ENCODE measurements at regions of chr1 and their contacts with region 1.

Region 1: GRCh38 chr1:205255941-205256780 is 28.4 kb downstream of the TMCC2 start:
- DNase-seq: peak; percentile 64
- ATAC-seq: peak; percentile 98
- H3K4me3 ChIP-seq: no peak overlapping the region
- H3K27ac ChIP-seq: no peak overlapping the region
- H3K4me1 ChIP-seq: peaks cover 4% of the 10 kb centered on the region
- H3K27me3 ChIP-seq: no peaks in the 10 kb centered on the region
- CTCF ChIP-seq: peak; percentile 93

Region 2: GRCh38 chr1:204989266-204990058 is 266.7 kb before region 1 on chr1:
- CTCF ChIA-PET with region 1: interaction called, 4 read pairs
- POLR2A ChIA-PET with region 1: interaction called, 4 read pairs
- in situ Hi-C with region 1: no loop called
- intact Hi-C with region 1: loop called (anchors 10 kb)
- DNase-seq: peak; percentile 53
- ATAC-seq: peak; percentile 88
- H3K4me3 ChIP-seq: no peak overlapping the region
- H3K27ac ChIP-seq: no peak overlapping the region
- H3K4me1 ChIP-seq: no peaks in the 10 kb centered on the region
- H3K27me3 ChIP-seq: no peaks in the 10 kb centered on the region; the same call in 1 of the 2 replicates
- CTCF ChIP-seq: peak; percentile 98

Region 3: GRCh38 chr1:205061665-205062069 is 194.5 kb before region 1 on chr1:
- CTCF ChIA-PET with region 1: interaction called, 5 read pairs
- POLR2A ChIA-PET with region 1: no interaction called
- in situ Hi-C with region 1: no loop called
- intact Hi-C with region 1: loop called (anchors 5 kb)
- DNase-seq: peak; percentile 36
- ATAC-seq: peak; percentile 76
- H3K4me3 ChIP-seq: no peak overlapping the region
- H3K27ac ChIP-seq: no peak overlapping the region
- H3K4me1 ChIP-seq: no peaks in the 10 kb centered on the region; the same call in 1 of the 2 replicates
- H3K27me3 ChIP-seq: no peaks in the 10 kb centered on the region
- CTCF ChIP-seq: peak; percentile 94

Region 4: DNA sequence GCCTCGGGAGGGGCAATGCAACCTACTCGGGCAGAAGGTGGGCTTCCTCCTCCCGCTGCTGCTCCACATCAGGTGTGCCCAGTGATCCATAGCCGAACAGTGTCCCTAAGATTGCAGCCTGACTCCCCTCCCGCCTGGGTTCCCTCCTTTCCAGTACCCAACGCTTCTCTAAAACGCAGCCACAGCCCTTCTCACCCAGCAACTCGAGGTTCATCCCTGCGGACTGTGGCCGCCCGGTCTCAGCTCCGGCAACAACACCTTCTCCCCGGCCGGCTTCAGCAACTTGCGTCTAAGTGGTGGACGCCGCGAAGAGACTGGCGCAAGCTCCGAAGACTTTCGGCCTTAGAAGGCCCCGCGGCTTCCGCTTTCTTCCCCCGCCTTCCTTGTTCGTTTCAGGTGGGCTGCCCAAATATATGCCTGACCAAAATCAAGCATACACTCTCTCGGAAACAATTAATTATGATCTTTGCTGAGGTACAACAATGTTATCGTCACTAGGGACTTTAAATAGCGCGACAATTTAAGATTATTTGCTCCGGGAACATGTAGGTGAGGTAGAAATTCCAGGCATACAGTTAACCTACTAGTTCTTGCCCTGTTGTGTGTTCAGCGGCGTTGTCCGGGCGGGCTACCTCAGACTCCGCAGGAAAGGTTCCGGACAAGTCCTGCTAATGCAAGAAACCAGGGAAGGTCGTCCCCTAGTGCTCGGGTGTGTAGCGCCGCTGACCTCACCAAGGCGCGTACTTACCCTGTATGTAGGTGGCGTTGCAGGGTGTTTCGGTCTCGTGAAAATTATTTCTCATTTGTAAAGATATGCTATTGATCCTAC is 134.3 kb before region 1 on chr1 and contains the start of gene RBBP5:
- CTCF ChIA-PET with region 1: no interaction called
- POLR2A ChIA-PET with region 1: interaction called, 5 read pairs
- in situ Hi-C with region 1: no loop called
- intact Hi-C with region 1: loop called (anchors 10 kb)
- DNase-seq: peak; percentile 97
- ATAC-seq: peak; percentile 100
- H3K4me3 ChIP-seq: peak within 1 kb of the TSS; percentile 96 to 97
- H3K27ac ChIP-seq: peak within 1 kb of the TSS; percentile 98
- H3K4me1 ChIP-seq: peaks cover 14% of the 10 kb centered on the region
- H3K27me3 ChIP-seq: no peaks in the 10 kb centered on the region
- CTCF ChIP-seq: peak; percentile 94
- total RNA-seq, gene RBBP5: 22.2 TPM

Region 5: GRCh38 chr1:205227584-205228006 is 28.6 kb before region 1 on chr1 and contains the start of gene TMCC2:
- CTCF ChIA-PET with region 1: interaction called, 28 read pairs
- POLR2A ChIA-PET with region 1: no interaction called
- in situ Hi-C with region 1: no loop called
- intact Hi-C with region 1: loop called (anchors 1 kb)
- DNase-seq: no peak
- ATAC-seq: peak; percentile 96
- H3K4me3 ChIP-seq: peak within 1 kb of the TSS; percentile 70 to 74
- H3K27ac ChIP-seq: peak within 1 kb of the TSS; percentile 65; the same call in 1 of the 2 replicates
- H3K4me1 ChIP-seq: peaks cover 9% of the 10 kb centered on the region
- H3K27me3 ChIP-seq: no peaks in the 10 kb centered on the region; the same call in 1 of the 2 replicates
- CTCF ChIP-seq: no peak
- total RNA-seq, gene TMCC2: 3.1 TPM